Calu3 (cell line): ENCODE measurements at regions of chr3 and their contacts with region 1.

Region 1: GRCh38 chr3:45612918-45613602 is 18.5 kb downstream of the LIMD1 start:
- DNase-seq: peak; percentile 59
- H3K4me3 Mint-ChIP-seq: peak overlapping the region; percentile 46
- H3K27ac Mint-ChIP-seq: peak overlapping the region; percentile 98
- H3K4me1 Mint-ChIP-seq: peaks cover 70% of the 10 kb centered on the region
- H3K27me3 Mint-ChIP-seq: no peaks in the 10 kb centered on the region
- CTCF ChIP-seq: no peak

Region 2: DNA sequence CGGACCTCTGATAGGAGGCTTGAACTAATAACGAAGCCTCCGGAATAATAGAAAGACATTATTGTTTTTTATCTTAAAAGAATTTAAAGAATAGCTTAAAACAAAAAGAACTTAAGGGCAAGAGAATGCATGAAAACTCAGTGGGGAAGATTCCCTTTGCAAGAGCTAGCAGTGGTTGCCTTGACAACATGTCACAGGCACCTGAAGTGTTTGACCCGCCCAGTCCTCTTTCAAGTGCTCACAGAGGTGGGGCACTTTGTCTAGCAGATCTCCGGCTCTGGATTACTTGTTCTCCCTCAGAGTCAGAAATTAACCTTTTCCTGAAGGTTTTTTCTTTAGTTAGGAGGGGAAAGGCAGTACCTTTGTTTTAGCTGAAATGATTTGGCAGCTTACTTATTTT is 186.9 kb before region 1 on chr3:
- CTCF ChIA-PET with region 1: no interaction called
- intact Hi-C with region 1: no loop called
- DNase-seq: no peak
- H3K4me3 Mint-ChIP-seq: no peak overlapping the region
- H3K27ac Mint-ChIP-seq: no peak overlapping the region
- H3K4me1 Mint-ChIP-seq: no peaks in the 10 kb centered on the region
- H3K27me3 Mint-ChIP-seq: no peaks in the 10 kb centered on the region
- CTCF ChIP-seq: no peak

Region 3: DNA sequence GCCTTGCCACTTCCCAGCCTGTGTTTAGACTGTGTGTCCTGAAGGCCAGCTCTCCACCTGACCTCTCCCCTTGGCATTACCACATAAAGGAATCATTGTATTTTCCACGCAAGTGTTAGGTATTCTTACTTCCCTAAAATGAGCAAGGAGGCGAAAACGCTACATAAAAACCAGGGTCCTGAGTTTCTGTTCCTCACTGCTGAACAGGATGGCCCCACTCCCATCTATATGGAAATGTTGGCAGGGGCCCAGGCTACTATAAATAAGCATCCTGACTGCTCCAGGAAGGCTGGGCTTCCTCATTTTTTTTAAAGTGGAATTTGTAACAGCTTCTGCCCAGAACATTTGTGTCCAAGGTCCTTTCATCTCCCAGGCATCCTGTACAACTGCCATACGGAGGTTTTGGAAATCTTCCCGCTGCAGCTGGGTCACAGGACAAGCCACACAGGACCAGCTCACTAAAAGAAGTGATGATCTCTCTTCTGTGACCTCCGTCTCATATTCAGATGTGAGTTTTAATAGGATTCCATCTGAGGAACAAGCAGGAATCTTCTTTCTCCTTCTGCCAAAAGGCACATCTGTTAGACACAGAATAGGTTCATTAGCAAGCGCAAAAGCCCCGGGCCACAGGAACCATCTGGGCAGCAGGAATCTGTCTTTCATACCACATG is 75.0 kb before region 1 on chr3:
- CTCF ChIA-PET with region 1: no interaction called
- intact Hi-C with region 1: no loop called
- DNase-seq: no peak
- H3K4me3 Mint-ChIP-seq: no peak overlapping the region
- H3K27ac Mint-ChIP-seq: no peak overlapping the region
- H3K4me1 Mint-ChIP-seq: no peaks in the 10 kb centered on the region
- H3K27me3 Mint-ChIP-seq: no peaks in the 10 kb centered on the region
- CTCF ChIP-seq: no peak

Region 4: GRCh38 chr3:45635477-45636256 is 22.6 kb after region 1 on chr3:
- CTCF ChIA-PET with region 1: interaction called, 12 read pairs
- intact Hi-C with region 1: no loop called
- DNase-seq: peak; percentile 23
- H3K4me3 Mint-ChIP-seq: no peak overlapping the region
- H3K27ac Mint-ChIP-seq: no peak overlapping the region
- H3K4me1 Mint-ChIP-seq: peaks cover 27% of the 10 kb centered on the region
- H3K27me3 Mint-ChIP-seq: no peaks in the 10 kb centered on the region
- CTCF ChIP-seq: no peak

Region 5: GRCh38 chr3:45647148-45647619 is 34.1 kb after region 1 on chr3:
- CTCF ChIA-PET with region 1: interaction called, 8 read pairs
- intact Hi-C with region 1: loop called (anchors 2 kb)
- DNase-seq: peak; percentile 20
- H3K4me3 Mint-ChIP-seq: no peak overlapping the region
- H3K27ac Mint-ChIP-seq: peak overlapping the region; percentile 46
- H3K4me1 Mint-ChIP-seq: peaks cover 48% of the 10 kb centered on the region
- H3K27me3 Mint-ChIP-seq: no peaks in the 10 kb centered on the region
- CTCF ChIP-seq: no peak